CD4-positive, alpha-beta memory T cell (primary cell): ENCODE measurements at regions of chr17 and their contacts with region 1.

Region 1: GRCh38 chr17:63406689-63407330 is 39.3 kb downstream of the CYB561 start:
- DNase-seq: peak; percentile 65 to 76 (median 67)
- H3K4me3 ChIP-seq: no peak overlapping the region
- H3K4me3 Mint-ChIP-seq: no peak overlapping the region
- H3K27ac ChIP-seq: no peak overlapping the region
- H3K27ac Mint-ChIP-seq: peak overlapping the region in 5 of 7 donors; percentile 10 to 86 (median 81)
- H3K4me1 ChIP-seq: peaks cover 5% of the 10 kb centered on the region
- H3K4me1 Mint-ChIP-seq: peaks cover 2 to 9% (median 7%) of the 10 kb centered on the region in 4 donors
- H3K27me3 ChIP-seq: no peaks in the 10 kb centered on the region
- H3K27me3 Mint-ChIP-seq: no peaks in the 10 kb centered on the region

Region 2: DNA sequence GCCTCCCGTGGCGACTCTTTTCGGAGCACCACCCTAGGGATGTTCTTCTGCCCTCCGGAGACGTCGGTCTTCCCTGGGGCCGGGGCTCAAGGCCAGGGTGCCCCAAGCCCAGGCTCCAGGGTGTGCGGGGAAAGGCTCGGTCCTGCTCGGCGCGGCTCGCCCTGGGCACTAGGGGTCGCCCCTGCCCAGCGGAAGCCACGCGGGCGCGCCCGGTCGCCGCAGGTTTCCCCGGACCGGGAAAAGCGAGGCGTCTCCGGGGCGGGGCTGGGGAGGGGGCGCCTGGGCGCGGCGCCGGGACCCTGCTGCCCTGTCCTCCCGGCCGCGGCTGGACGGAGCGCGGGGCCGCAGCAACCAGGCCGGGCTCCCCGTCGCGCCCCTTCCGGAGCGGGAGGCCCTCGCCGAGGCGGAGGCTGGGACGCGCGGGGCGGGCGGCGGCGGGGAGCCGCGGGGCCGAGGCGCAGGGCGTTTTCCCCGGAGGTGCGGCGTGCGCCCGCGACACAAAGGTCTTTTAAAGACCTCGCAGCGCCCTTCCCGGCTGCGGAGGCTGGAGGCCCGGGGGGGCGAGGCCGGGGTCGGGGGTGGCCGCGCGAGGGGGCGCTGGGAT is 702.9 kb before region 1 on chr17:
- CTCF ChIA-PET with region 1: interaction called, 14 read pairs
- POLR2A ChIA-PET with region 1: interaction called, 5 read pairs
- intact Hi-C with region 1: no loop called
- DNase-seq: peak in 4 of 5 donors; percentile 69 to 82 (median 72)
- H3K4me3 ChIP-seq: peak overlapping the region in 1 of 2 donors; percentile 32
- H3K4me3 Mint-ChIP-seq: peak overlapping the region in 5 of 8 donors; percentile 20 to 49 (median 34)
- H3K27ac ChIP-seq: no peak overlapping the region
- H3K27ac Mint-ChIP-seq: peak overlapping the region in 1 of 7 donors; percentile 10
- H3K4me1 ChIP-seq: peaks cover 10% of the 10 kb centered on the region
- H3K4me1 Mint-ChIP-seq: peaks cover 3 to 19% (median 4%) of the 10 kb centered on the region in 4 donors
- H3K27me3 ChIP-seq: no peaks in the 10 kb centered on the region
- H3K27me3 Mint-ChIP-seq: peaks cover 3% of the 10 kb centered on the region in 2 donors

Region 3: DNA sequence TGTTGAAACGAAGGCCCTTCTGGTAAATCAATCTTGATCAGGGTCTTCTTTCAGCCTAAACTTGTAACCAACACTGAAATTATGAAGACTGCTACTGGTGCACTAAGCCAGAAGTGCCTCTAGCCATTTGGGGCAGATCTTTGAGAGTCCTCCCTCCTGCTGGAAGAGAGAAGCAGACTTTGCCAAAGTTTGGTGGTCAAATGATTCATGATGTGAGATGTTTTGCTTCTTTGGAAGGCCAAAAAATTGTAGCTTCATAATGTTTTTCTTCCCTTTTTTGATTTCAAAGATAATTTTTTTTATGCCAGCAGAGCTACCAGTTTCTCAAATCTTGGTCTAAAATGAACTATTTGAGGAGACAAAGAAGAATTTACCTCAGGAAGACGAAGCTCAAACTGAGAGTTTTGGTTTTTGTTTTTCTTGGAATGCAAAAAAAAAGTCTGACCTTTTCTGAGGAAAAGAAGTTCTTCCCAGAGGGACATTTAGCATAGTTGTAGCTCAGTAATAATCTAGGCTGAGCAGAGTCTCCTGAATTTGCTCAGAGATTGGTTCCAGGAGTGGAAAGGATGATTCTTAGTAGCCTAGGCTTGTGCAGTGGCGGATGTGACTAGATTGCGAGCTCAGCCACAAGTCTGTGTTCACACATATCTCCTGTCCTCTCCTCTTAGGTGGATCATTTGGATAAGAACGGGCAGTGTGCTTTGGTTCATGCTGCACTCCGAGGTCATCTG is 11.6 kb before region 1 on chr17:
- CTCF ChIA-PET with region 1: interaction called, 10 read pairs
- POLR2A ChIA-PET with region 1: no interaction called
- intact Hi-C with region 1: no loop called
- DNase-seq: no peak
- H3K4me3 ChIP-seq: no peak overlapping the region
- H3K4me3 Mint-ChIP-seq: no peak overlapping the region
- H3K27ac ChIP-seq: no peak overlapping the region
- H3K27ac Mint-ChIP-seq: no peak overlapping the region
- H3K4me1 ChIP-seq: no peaks in the 10 kb centered on the region
- H3K4me1 Mint-ChIP-seq: peaks cover 0 to 3% (median 0%) of the 10 kb centered on the region in 4 donors
- H3K27me3 ChIP-seq: no peaks in the 10 kb centered on the region
- H3K27me3 Mint-ChIP-seq: no peaks in the 10 kb centered on the region

Region 4: GRCh38 chr17:63425482-63425881 is 18.7 kb after region 1 on chr17:
- CTCF ChIA-PET with region 1: interaction called, 50 read pairs
- POLR2A ChIA-PET with region 1: no interaction called
- intact Hi-C with region 1: no loop called
- DNase-seq: peak; percentile 68 to 74 (median 72)
- H3K4me3 ChIP-seq: no peak overlapping the region
- H3K4me3 Mint-ChIP-seq: peak overlapping the region; percentile 32 to 82 (median 48)
- H3K27ac ChIP-seq: no peak overlapping the region
- H3K27ac Mint-ChIP-seq: peak overlapping the region in 5 of 7 donors; percentile 47 to 87 (median 67)
- H3K4me1 ChIP-seq: peaks cover 49% of the 10 kb centered on the region
- H3K4me1 Mint-ChIP-seq: peaks cover 26 to 54% (median 44%) of the 10 kb centered on the region in 4 donors
- H3K27me3 ChIP-seq: no peaks in the 10 kb centered on the region
- H3K27me3 Mint-ChIP-seq: no peaks in the 10 kb centered on the region